Activated CD4-positive, alpha-beta memory T cell treated with anti-CD3 and anti-CD28 coated beads, Interleukin-2, amount 10 ng/mL, durations not matched to agents 7 days and 5 days (primary cell): ENCODE measurements at regions of chr11 and their contacts with region 1.

Region 1: DNA sequence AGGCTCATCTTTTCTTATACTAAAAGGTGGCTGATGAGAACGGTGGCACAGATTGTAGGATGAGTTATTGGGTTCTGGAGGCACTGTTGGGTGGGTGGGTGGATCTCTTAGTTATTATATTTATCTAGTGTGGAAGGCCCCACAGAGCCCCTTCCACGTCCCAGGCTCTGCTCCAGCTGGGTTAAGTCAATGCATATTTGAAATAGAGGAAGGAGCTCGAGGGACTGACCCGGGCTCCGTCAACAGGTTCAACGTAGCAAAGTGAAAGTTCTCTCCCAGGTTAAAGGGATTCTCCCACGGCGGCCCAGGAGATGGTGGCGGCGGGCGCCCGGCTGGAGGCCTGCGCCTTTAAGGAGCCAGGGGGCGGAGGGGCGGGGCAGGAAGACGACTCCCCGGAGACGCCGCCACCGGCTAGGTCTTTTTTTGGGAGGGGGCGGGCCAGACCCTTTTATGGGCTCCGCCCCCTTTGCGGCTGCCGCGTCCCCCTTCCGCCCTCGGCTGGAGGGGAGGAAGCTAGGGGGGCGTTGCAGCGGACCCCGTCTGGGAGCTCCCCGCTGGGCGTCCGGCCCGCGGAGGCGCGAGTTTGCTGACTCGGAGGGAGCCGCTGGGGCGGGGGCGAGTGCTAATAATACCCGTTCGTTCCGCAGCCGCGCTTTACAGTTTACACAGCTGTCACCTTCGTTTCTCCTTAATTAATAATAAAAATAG is 1.5 kb upstream of the INPPL1 start:
- DNase-seq: peak; percentile 96
- H3K4me3 Mint-ChIP-seq: peak overlapping the region; percentile 87
- H3K27ac Mint-ChIP-seq: peak overlapping the region; percentile 82
- H3K4me1 Mint-ChIP-seq: peaks cover 34% of the 10 kb centered on the region
- H3K27me3 Mint-ChIP-seq: peaks cover 7% of the 10 kb centered on the region

Region 2: DNA sequence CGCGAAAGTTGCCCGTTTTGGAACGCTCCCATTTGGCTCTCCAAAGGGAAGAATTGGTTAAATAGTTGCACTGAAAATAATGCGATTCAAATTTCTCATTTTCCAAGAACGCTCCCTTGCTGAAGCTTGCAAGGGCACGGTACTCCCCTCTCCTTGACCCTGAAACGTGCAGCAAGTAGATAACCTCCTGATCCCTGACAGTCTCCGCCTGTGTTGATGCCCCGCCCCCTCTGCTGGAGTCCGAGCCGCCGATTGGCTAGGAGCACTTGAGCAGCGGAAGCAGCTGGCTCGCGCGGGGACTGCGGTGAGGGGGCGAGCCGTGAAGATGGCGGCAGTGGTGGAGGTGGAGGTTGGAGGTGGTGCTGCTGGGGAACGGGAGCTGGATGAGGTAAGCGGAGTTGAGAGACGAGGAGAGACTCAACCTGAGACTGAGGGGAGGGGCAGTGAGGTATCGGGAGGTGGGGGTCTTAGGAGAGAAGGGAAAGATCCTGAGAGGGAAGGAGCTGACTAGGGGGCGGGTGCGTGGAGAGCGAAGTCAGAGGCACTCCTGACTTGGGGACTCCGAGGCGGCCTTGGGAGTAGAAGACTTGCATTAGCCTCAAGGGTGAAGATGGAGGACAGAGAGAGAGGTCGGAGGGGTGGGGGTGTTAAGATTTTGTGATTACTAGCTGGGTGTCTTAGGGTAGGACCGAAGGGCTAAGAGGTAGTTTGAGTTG is 294.2 kb before region 1 on chr11 and contains the start of gene RNF121:
- CTCF ChIA-PET with region 1: interaction called, 9 read pairs
- POLR2A ChIA-PET with region 1: interaction called, 18 read pairs
- DNase-seq: peak; percentile 98
- H3K4me3 Mint-ChIP-seq: peak within 1 kb of the TSS; percentile 95
- H3K27ac Mint-ChIP-seq: peak within 1 kb of the TSS; percentile 94
- H3K4me1 Mint-ChIP-seq: peaks cover 51% of the 10 kb centered on the region
- H3K27me3 Mint-ChIP-seq: no peaks in the 10 kb centered on the region
- total RNA-seq, gene RNF121: 25.7 to 28.1 TPM

Region 3: DNA sequence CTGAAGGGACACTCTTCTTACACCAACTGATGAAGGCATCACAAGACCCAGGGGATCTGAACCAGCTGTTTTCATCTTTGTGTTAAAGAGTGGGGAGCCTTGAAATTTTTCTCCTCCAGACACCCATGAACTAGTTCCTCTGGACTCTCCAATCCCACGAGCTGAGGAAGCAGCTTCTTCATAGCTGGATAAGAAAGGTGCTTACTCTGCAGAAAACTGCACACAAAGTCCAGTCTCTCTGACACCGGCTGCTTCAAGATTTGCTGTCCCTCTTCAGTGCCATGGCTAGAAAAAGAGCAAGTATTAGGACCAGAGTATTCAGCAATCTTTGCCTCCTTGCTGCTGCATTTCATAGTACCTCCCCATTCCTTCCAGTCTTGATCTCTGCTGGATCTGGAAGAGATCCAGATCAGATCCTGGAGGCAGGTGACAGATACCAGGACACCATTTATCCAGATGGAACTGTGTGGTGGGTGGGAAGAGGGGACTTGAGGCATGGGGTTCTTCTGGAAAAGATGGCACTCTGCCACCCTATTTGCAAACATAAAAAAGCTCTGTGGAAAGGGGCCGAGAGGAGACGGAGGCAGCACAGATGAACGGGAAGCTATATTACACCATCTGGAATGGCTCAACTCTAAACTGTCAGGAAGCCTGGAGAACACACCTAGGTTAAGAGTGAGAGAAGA is 198.8 kb before region 1 on chr11:
- CTCF ChIA-PET with region 1: interaction called, 13 read pairs
- POLR2A ChIA-PET with region 1: no interaction called
- DNase-seq: no peak
- H3K4me3 Mint-ChIP-seq: no peak overlapping the region
- H3K27ac Mint-ChIP-seq: no peak overlapping the region
- H3K4me1 Mint-ChIP-seq: peaks cover 17% of the 10 kb centered on the region
- H3K27me3 Mint-ChIP-seq: no peaks in the 10 kb centered on the region

Region 4: GRCh38 chr11:72238040-72238450 is 15.0 kb after region 1 on chr11:
- CTCF ChIA-PET with region 1: interaction called, 14 read pairs
- POLR2A ChIA-PET with region 1: interaction called, 8 read pairs
- DNase-seq: peak; percentile 65
- H3K4me3 Mint-ChIP-seq: no peak overlapping the region
- H3K27ac Mint-ChIP-seq: no peak overlapping the region
- H3K4me1 Mint-ChIP-seq: peaks cover 12% of the 10 kb centered on the region
- H3K27me3 Mint-ChIP-seq: peaks cover 38% of the 10 kb centered on the region

Region 5: GRCh38 chr11:72263361-72263760 is 40.3 kb after region 1 on chr11:
- CTCF ChIA-PET with region 1: no interaction called
- POLR2A ChIA-PET with region 1: no interaction called
- DNase-seq: no peak
- H3K4me3 Mint-ChIP-seq: no peak overlapping the region
- H3K27ac Mint-ChIP-seq: no peak overlapping the region
- H3K4me1 Mint-ChIP-seq: peaks cover 20% of the 10 kb centered on the region
- H3K27me3 Mint-ChIP-seq: peaks cover 22% of the 10 kb centered on the region

Region 6: DNA sequence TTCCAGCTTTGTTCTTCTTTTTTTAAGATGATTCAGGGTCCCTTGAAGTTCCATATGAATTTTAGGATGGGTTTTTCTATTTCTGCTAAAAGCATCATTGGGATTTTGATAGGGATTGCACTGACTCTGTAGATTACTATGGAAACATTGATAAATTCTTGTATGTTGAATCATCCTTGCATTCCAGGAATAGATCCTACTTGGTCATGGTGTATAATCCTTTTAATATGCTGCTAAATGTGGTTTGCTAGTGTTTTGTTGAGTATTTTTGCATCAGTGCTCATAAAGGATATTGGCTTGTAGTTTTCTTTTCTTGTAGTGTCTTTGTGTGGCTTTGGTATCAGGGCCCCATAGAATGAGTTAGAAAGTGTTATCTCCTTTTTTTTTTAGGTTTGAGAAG is 55.9 kb after region 1 on chr11:
- CTCF ChIA-PET with region 1: no interaction called
- POLR2A ChIA-PET with region 1: no interaction called
- DNase-seq: no peak
- H3K4me3 Mint-ChIP-seq: no peak overlapping the region
- H3K27ac Mint-ChIP-seq: no peak overlapping the region
- H3K4me1 Mint-ChIP-seq: no peaks in the 10 kb centered on the region
- H3K27me3 Mint-ChIP-seq: peaks cover 23% of the 10 kb centered on the region